Posterior vena cava (tissue), 2 donors: ENCODE measurements at regions of chr15 and their contacts with region 1.

Region 1: GRCh38 chr15:80669663-80670273 is 25.3 kb upstream of the ABHD17C start:
- DNase-seq: no peak

Region 2: GRCh38 chr15:80721476-80721875 is 51.7 kb after region 1 on chr15:
- intact Hi-C with region 1: loop called in 1 of 2 experiments (anchors 5 kb)
- DNase-seq: no peak

Region 3: DNA sequence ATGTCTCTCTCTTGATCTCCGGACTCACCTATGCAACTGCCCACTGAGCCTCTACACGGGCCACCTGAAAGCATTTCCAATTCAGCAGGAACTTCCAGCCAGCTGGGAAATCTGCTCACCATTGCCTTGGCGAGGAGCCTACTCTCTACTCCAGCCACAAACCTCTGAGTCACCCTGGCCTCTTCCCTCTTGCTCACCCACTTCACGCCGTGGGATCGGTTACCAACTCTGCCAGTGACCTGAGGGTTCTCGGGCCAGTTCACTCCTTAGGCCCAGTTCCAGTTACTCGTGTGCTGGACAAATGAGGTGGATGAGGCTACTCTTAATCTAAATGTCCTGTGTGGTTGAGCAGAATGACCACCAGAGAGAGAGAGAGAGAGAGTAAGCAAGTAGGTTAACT is 179.5 kb after region 1 on chr15:
- intact Hi-C with region 1: no loop called
- DNase-seq: no peak